T-cell (primary cell): ENCODE measurements at regions of chr2 and their contacts with region 1.

Region 1: GRCh38 chr2:180494286-180494685 is 486.1 kb upstream of the UBE2E3 start:
- DNase-seq: no peak
- ATAC-seq: no peak
- H3K4me3 ChIP-seq: no peak overlapping the region
- H3K4me3 Mint-ChIP-seq: no peak overlapping the region
- H3K27ac ChIP-seq: no peak overlapping the region
- H3K27ac Mint-ChIP-seq: no peak overlapping the region
- H3K4me1 ChIP-seq: no peaks in the 10 kb centered on the region
- H3K4me1 Mint-ChIP-seq: no peaks in the 10 kb centered on the region
- H3K27me3 ChIP-seq: peaks cover 0 to 14% of the 10 kb centered on the region in 2 experiments
- H3K27me3 Mint-ChIP-seq: peaks cover 3 to 15% of the 10 kb centered on the region in 2 donors

Region 2: DNA sequence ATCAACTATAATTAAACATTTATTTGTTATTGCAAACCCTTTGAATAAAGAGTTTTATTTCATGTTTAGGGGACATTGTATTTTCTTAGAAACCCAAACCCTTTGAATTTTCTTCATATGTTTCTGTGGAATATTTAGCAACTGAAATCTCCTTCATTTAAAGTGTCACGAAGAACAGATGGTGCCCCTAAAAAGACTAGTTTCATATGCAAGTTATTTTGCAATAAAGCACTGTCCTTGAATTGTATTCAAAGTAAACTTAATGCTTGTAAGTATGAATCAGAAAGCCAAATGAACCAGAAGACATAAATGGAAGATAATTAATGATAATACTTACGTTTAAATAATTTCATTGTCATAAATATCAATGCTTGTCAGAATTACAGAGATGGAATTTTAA is 335.3 kb before region 1 on chr2:
- CTCF ChIA-PET with region 1: no interaction called
- POLR2A ChIA-PET with region 1: no interaction called
- DNase-seq: no peak
- ATAC-seq: no peak
- H3K4me3 ChIP-seq: no peak overlapping the region
- H3K4me3 Mint-ChIP-seq: no peak overlapping the region
- H3K27ac ChIP-seq: no peak overlapping the region
- H3K27ac Mint-ChIP-seq: no peak overlapping the region
- H3K4me1 ChIP-seq: no peaks in the 10 kb centered on the region
- H3K4me1 Mint-ChIP-seq: no peaks in the 10 kb centered on the region
- H3K27me3 ChIP-seq: no peaks in the 10 kb centered on the region
- H3K27me3 Mint-ChIP-seq: no peaks in the 10 kb centered on the region

Region 3: GRCh38 chr2:180222644-180223043 is 271.6 kb before region 1 on chr2:
- CTCF ChIA-PET with region 1: interaction called in 1 of 2 experiments, 10 read pairs
- POLR2A ChIA-PET with region 1: no interaction called
- DNase-seq: no peak
- ATAC-seq: no peak
- H3K4me3 ChIP-seq: no peak overlapping the region
- H3K4me3 Mint-ChIP-seq: no peak overlapping the region
- H3K27ac ChIP-seq: no peak overlapping the region
- H3K27ac Mint-ChIP-seq: no peak overlapping the region
- H3K4me1 ChIP-seq: no peaks in the 10 kb centered on the region
- H3K4me1 Mint-ChIP-seq: no peaks in the 10 kb centered on the region
- H3K27me3 ChIP-seq: no peaks in the 10 kb centered on the region
- H3K27me3 Mint-ChIP-seq: peaks cover 0 to 4% of the 10 kb centered on the region in 2 donors